OCI-LY7 (cell line): ENCODE measurements at regions of chr7 and their contacts with region 1.

Region 1: DNA sequence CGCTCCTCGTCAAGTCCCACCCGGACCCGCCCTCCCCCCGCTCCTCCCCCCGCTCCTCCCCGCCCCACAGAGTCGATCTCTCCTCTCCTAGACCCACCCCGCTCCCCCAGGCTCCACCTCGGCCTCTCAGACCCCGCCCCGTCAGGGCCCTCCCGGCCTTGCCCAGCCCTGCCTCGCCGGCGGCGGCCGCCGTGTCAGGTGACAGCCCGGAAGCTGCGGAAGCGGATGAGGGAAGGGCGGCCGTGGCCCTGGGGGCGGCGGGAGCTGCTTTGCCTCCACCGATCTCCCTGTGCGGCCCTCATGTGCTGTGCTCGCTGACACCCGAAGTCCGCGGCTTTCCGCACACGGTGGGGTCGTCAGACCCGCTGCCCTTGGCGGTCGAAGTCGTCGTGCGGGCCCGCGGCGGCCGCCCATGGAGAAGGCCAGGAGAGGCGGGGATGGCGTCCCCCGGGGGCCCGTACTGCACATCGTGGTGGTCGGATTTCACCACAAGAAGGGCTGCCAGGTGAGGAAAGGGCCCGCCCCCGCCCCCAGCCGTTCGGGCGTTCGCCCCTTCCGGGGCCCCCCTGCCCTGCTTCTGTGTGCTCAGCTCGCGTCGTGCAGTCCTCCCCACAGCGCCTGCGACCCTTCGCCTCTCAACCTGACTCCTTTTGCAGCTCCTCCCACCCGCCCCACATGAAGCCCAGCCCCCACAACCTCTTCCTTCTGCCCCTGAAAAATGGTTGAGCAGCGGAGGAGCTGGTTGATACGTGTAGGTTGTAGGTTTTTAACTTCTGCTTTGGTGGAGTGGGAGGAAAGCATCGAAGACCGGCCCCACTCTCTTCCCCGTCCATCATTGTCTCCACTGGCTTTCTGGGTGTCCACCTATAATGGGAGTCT is at the start of gene AVL9:
- DNase-seq: peak; percentile 97
- H3K4me3 ChIP-seq: peak within 1 kb of the TSS; percentile 82
- H3K27ac ChIP-seq: peak within 1 kb of the TSS; percentile 88
- H3K4me1 ChIP-seq: peaks cover 27% of the 10 kb centered on the region
- CTCF ChIP-seq: no peak
- total RNA-seq, gene AVL9: 23.4 and 36.6 TPM in 2 replicates

Region 2: DNA sequence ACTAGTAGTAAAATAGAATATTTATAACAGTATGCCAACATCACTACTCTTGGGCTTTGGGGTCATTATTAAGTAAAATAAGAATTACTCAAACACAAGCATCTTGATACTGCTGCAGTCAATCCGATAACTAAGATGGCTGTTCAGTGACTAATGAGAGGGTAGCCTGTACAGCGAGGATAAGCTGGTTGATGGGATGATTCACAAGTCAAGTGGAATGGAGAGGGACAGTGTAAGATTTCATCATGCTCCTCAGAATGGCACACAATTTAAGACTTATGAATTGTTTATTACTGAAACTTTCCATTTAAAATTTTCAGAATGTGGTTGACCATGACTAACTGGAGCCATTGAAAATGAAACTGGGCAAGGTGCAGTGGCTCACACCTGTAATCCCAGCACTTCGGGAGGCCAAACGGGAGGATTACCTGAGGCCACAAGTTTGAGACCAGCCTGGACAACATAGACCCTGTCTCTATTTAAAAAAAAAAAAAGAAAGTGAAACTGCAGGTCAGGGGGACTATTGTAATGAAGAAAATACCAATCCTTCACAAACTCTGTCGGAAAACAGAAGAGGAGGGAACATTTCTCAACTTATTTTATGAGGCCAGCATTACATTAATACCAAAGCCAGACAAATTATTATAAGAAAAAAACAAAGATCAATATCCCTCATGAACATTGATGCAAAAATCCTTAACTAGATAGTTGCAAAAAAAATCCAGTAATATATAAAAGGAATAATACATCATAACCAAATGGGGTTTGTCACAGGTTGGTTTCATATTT is 10.9 kb after region 1 on chr7:
- CTCF ChIA-PET with region 1: interaction called, 3 read pairs
- POLR2A ChIA-PET with region 1: interaction called, 11 read pairs
- intact Hi-C with region 1: no loop called
- DNase-seq: no peak
- H3K4me3 ChIP-seq: no peak overlapping the region
- H3K27ac ChIP-seq: no peak overlapping the region
- H3K4me1 ChIP-seq: no peaks in the 10 kb centered on the region
- CTCF ChIP-seq: no peak

Region 3: DNA sequence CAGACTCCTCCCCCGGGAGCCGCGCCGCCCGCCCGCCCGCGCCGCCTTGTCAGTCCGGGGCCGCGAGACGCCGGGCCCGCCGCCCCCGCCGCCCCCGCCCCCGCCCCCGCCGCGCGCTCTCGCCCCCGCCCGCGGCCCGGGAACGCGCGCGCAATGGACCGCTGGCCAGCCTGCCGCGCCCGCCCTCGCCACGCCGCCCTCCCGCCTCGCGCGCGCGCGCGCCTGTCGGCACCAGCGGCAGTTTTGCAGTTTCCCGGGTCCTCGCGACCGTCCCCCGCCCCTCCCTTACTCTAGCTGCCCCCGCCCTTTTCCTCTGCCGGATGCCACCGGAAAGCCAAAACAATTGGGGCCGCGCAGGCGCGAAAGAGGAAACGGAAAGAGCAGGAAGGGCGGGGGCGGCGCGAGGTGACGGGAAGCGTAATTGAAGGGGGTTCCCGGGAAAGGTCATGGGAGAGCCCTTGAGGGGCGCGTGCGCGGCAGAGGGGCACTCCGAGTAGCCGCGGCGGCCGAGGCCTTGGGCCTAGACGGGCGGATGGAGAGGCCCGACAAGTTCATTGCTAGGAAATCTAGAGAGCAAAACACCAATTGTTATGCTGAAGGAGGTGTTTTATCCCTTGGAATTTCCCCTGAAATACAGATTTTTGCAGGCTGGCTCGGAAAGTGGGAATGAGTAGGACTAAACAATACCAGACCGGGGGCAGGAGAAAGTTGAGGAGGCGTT is 396.4 kb after region 1 on chr7:
- CTCF ChIA-PET with region 1: no interaction called
- POLR2A ChIA-PET with region 1: no interaction called
- intact Hi-C with region 1: loop called (anchors 5 kb)
- DNase-seq: peak; percentile 95
- H3K4me3 ChIP-seq: peak overlapping the region; percentile 84
- H3K27ac ChIP-seq: peak overlapping the region; percentile 91
- H3K4me1 ChIP-seq: peaks cover 33% of the 10 kb centered on the region
- CTCF ChIP-seq: no peak